Caco-2 (cell line): ENCODE measurements at regions of chr11 and their contacts with region 1.

Region 1: DNA sequence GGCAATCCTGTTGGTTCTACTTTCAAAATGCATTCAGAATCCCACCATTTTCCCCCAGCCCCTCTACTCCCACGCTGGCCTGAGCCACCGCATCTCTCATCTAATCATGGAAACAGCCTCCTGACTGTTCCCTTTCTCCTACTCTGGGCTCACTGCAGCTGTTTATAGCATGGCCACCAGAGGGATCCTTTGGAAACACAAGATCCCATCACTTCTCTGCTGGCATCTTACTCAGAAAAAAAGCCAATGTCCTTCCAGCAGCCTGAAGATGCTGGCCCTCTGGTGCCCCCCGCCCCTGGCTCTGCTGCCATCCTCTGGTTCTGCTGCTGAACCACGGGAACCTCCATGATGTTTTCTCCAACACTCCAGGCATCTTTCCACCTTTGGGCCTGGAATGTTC is 11.1 kb downstream of the MS4A8 start:
- DNase-seq: peak; percentile 53 to 56
- H3K4me3 ChIP-seq: no peak overlapping the region
- H3K4me3 Mint-ChIP-seq: no peak overlapping the region
- H3K27ac Mint-ChIP-seq: no peak overlapping the region
- H3K4me1 ChIP-seq: peaks cover 55% of the 10 kb centered on the region
- H3K4me1 Mint-ChIP-seq: peaks cover 15% of the 10 kb centered on the region
- H3K27me3 ChIP-seq: no peaks in the 10 kb centered on the region
- H3K27me3 Mint-ChIP-seq: no peaks in the 10 kb centered on the region
- CTCF ChIP-seq: peak; percentile 16 to 40

Region 2: GRCh38 chr11:59040607-59041006 is 1669.9 kb before region 1 on chr11:
- CTCF ChIA-PET with region 1: no interaction called
- POLR2A ChIA-PET with region 1: no interaction called
- intact Hi-C with region 1: no loop called
- DNase-seq: no peak
- H3K4me3 ChIP-seq: no peak overlapping the region
- H3K4me3 Mint-ChIP-seq: no peak overlapping the region
- H3K27ac Mint-ChIP-seq: no peak overlapping the region
- H3K4me1 ChIP-seq: no peaks in the 10 kb centered on the region
- H3K4me1 Mint-ChIP-seq: no peaks in the 10 kb centered on the region
- H3K27me3 ChIP-seq: no peaks in the 10 kb centered on the region
- H3K27me3 Mint-ChIP-seq: no peaks in the 10 kb centered on the region
- CTCF ChIP-seq: no peak

Region 3: GRCh38 chr11:60561254-60561653 is 149.2 kb before region 1 on chr11:
- CTCF ChIA-PET with region 1: no interaction called
- POLR2A ChIA-PET with region 1: no interaction called
- intact Hi-C with region 1: no loop called
- DNase-seq: no peak
- H3K4me3 ChIP-seq: no peak overlapping the region
- H3K4me3 Mint-ChIP-seq: no peak overlapping the region
- H3K27ac Mint-ChIP-seq: no peak overlapping the region
- H3K4me1 ChIP-seq: no peaks in the 10 kb centered on the region
- H3K4me1 Mint-ChIP-seq: no peaks in the 10 kb centered on the region
- H3K27me3 ChIP-seq: no peaks in the 10 kb centered on the region
- H3K27me3 Mint-ChIP-seq: no peaks in the 10 kb centered on the region
- CTCF ChIP-seq: no peak

Region 4: GRCh38 chr11:60743058-60743457 is 32.6 kb after region 1 on chr11:
- CTCF ChIA-PET with region 1: interaction called, 4 read pairs
- POLR2A ChIA-PET with region 1: no interaction called
- intact Hi-C with region 1: loop called (anchors 2 kb)
- DNase-seq: no peak
- H3K4me3 ChIP-seq: no peak overlapping the region
- H3K4me3 Mint-ChIP-seq: no peak overlapping the region
- H3K27ac Mint-ChIP-seq: no peak overlapping the region
- H3K4me1 ChIP-seq: peaks cover 32% of the 10 kb centered on the region
- H3K4me1 Mint-ChIP-seq: peaks cover 15% of the 10 kb centered on the region
- H3K27me3 ChIP-seq: no peaks in the 10 kb centered on the region
- H3K27me3 Mint-ChIP-seq: no peaks in the 10 kb centered on the region
- CTCF ChIP-seq: peak in 1 of 2 experiments; percentile 31

Region 5: DNA sequence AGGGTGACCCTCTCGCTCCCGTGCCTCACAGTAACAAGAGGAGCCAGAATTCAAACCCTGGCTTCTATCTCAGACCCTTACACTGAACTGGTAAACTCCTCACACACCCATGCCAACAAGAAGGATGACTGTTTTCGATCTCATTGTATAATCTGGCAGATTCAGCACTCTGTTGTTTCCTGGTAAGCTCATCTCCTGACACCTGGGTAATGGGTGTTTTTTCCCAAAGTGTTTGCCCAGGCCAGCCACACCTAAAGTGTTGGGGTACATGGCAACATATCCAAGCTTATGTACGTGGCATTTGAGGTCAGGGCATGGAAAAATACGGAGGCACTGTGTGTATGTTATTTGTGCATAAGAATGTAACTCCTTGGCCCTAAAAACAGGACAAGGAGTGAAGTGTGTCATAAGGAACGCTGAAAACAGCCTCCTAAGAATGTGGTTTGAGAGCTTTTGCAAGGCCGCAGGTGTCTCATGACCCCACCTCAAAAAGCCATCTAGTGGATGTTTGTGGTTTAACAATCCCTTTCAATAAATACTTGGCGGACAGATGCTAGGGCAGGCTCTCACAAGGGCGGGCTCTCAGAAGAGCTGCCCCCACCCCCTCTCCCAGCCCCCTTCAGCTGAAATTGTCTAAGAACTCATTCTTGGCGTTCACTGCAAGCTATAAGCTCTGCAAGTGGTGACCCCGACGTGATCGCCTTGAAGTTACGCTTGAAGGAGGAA is 46.0 kb after region 1 on chr11 and contains the start of gene MS4A15:
- CTCF ChIA-PET with region 1: interaction called, 4 read pairs
- POLR2A ChIA-PET with region 1: no interaction called
- intact Hi-C with region 1: loop called (anchors 1 kb)
- DNase-seq: peak; percentile 52 to 61
- H3K4me3 ChIP-seq: no peak within 1 kb of the TSS
- H3K4me3 Mint-ChIP-seq: no peak within 1 kb of the TSS
- H3K27ac Mint-ChIP-seq: peak within 1 kb of the TSS; percentile 44
- H3K4me1 ChIP-seq: peaks cover 30% of the 10 kb centered on the region
- H3K4me1 Mint-ChIP-seq: peaks cover 22% of the 10 kb centered on the region
- H3K27me3 ChIP-seq: no peaks in the 10 kb centered on the region
- H3K27me3 Mint-ChIP-seq: no peaks in the 10 kb centered on the region
- CTCF ChIP-seq: peak; percentile 31 to 51
- total RNA-seq, gene MS4A15: not detected in 2 replicates

Region 6: GRCh38 chr11:60932605-60933356 is 222.3 kb after region 1 on chr11:
- CTCF ChIA-PET with region 1: no interaction called
- POLR2A ChIA-PET with region 1: no interaction called
- intact Hi-C with region 1: no loop called
- DNase-seq: peak in 1 of 2 experiments; percentile 62
- H3K4me3 ChIP-seq: no peak overlapping the region
- H3K4me3 Mint-ChIP-seq: no peak overlapping the region
- H3K27ac Mint-ChIP-seq: no peak overlapping the region
- H3K4me1 ChIP-seq: no peaks in the 10 kb centered on the region
- H3K4me1 Mint-ChIP-seq: no peaks in the 10 kb centered on the region
- H3K27me3 ChIP-seq: no peaks in the 10 kb centered on the region
- H3K27me3 Mint-ChIP-seq: no peaks in the 10 kb centered on the region
- CTCF ChIP-seq: no peak